ENCODE measurements at regions of chr5 and their contacts with region 1.

Region 1: GRCh38 chr5:54703133-54703532 is 185.6 kb downstream of the SNX18 start:
- DNase-seq: peak; percentile 10
- H3K4me3 Mint-ChIP-seq: no peak overlapping the region
- H3K27ac Mint-ChIP-seq: peak overlapping the region; percentile 39
- H3K4me1 Mint-ChIP-seq: peaks cover 34% of the 10 kb centered on the region
- H3K27me3 Mint-ChIP-seq: no peaks in the 10 kb centered on the region
- CTCF ChIP-seq: no peak

Region 2: GRCh38 chr5:54743997-54744788 is 41.1 kb after region 1 on chr5:
- CTCF ChIA-PET with region 1: no interaction called
- intact Hi-C with region 1: loop called (anchors 5 kb)
- DNase-seq: peak; percentile 32
- H3K4me3 Mint-ChIP-seq: no peak overlapping the region
- H3K27ac Mint-ChIP-seq: no peak overlapping the region
- H3K4me1 Mint-ChIP-seq: peaks cover 9% of the 10 kb centered on the region
- H3K27me3 Mint-ChIP-seq: no peaks in the 10 kb centered on the region
- CTCF ChIP-seq: no peak

Region 3: GRCh38 chr5:54807421-54807820 is 104.3 kb after region 1 on chr5:
- CTCF ChIA-PET with region 1: no interaction called
- intact Hi-C with region 1: loop called (anchors 5 kb)
- DNase-seq: no peak
- H3K4me3 Mint-ChIP-seq: no peak overlapping the region
- H3K27ac Mint-ChIP-seq: peak overlapping the region; percentile 86
- H3K4me1 Mint-ChIP-seq: peaks cover 15% of the 10 kb centered on the region
- H3K27me3 Mint-ChIP-seq: no peaks in the 10 kb centered on the region
- CTCF ChIP-seq: no peak

Measured in Calu3 (cell line).